ENCODE measurements at regions of chr16 and their contacts with region 1.

Region 1: DNA sequence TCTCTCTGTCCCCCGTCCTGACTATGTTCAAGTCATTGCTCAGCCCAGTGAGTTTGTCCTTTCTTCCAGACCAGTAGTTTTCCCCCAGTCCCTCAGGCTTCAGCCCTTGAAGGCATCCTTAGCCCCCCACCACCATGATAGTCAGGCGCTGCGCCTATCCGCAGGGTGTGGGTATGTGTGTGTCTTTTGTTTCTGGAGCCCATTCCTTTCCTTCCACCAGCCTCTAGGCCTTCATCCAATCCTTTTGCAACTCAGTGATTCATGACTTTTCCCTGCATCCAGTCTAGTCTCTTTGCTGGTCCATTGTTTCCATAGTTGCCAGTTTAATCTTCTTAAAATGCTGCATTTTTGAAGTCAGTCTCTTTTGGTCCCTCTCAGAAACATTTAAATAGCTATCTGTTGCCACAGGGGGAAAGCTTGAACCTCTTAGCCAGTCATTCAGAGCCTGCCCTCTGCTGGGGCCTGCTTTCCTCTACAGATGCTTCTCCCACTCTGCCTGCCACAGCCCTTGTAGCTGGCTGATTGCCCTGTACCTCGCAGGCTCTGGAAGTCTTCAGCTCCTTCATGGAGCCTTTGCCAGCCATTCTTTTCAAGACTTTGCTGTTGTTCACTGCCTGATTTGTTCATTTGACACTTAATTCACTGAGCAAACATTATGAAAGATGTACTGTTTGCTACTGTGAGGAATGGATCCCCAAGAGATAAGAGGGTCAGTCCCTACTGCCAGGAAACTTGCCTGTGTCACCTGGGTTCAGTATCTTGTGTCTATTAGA is 55.9 kb upstream of the ADCY7 start:
- DNase-seq: peak; percentile 75 to 80
- H3K4me3 ChIP-seq: no peak overlapping the region
- H3K4me3 Mint-ChIP-seq: no peak overlapping the region
- H3K27ac Mint-ChIP-seq: peak overlapping the region; percentile 69
- H3K4me1 ChIP-seq: peaks cover 29% of the 10 kb centered on the region
- H3K4me1 Mint-ChIP-seq: peaks cover 24% of the 10 kb centered on the region
- H3K27me3 ChIP-seq: no peaks in the 10 kb centered on the region
- H3K27me3 Mint-ChIP-seq: no peaks in the 10 kb centered on the region
- CTCF ChIP-seq: peak; percentile 76 to 91

Region 2: GRCh38 chr16:49959563-49960282 is 250.7 kb before region 1 on chr16:
- CTCF ChIA-PET with region 1: interaction called, 18 read pairs
- POLR2A ChIA-PET with region 1: no interaction called
- intact Hi-C with region 1: no loop called
- DNase-seq: no peak
- H3K4me3 ChIP-seq: no peak overlapping the region
- H3K4me3 Mint-ChIP-seq: no peak overlapping the region
- H3K27ac Mint-ChIP-seq: no peak overlapping the region
- H3K4me1 ChIP-seq: no peaks in the 10 kb centered on the region
- H3K4me1 Mint-ChIP-seq: peaks cover 1% of the 10 kb centered on the region
- H3K27me3 ChIP-seq: no peaks in the 10 kb centered on the region
- H3K27me3 Mint-ChIP-seq: peaks cover 3% of the 10 kb centered on the region
- CTCF ChIP-seq: no peak

Region 3: GRCh38 chr16:50065624-50066481 is 144.6 kb before region 1 on chr16 and contains the start of gene HEATR3:
- CTCF ChIA-PET with region 1: interaction called, 9 read pairs
- POLR2A ChIA-PET with region 1: no interaction called
- intact Hi-C with region 1: loop called (anchors 1 kb)
- DNase-seq: peak; percentile 96 to 97
- H3K4me3 ChIP-seq: peak within 1 kb of the TSS; percentile 86
- H3K4me3 Mint-ChIP-seq: peak within 1 kb of the TSS; percentile 94
- H3K27ac Mint-ChIP-seq: peak within 1 kb of the TSS; percentile 88
- H3K4me1 ChIP-seq: 0 out of 2 replicates have a peak, but pooled peaks cover 3% of the 10 kb centered on the region
- H3K4me1 Mint-ChIP-seq: peaks cover 19% of the 10 kb centered on the region
- H3K27me3 ChIP-seq: no peaks in the 10 kb centered on the region
- H3K27me3 Mint-ChIP-seq: no peaks in the 10 kb centered on the region
- CTCF ChIP-seq: no peak
- total RNA-seq, gene HEATR3: 41.6 and 42.8 TPM in 2 replicates

Region 4: GRCh38 chr16:50136399-50136798 is 74.1 kb before region 1 on chr16:
- CTCF ChIA-PET with region 1: interaction called, 13 read pairs
- POLR2A ChIA-PET with region 1: no interaction called
- intact Hi-C with region 1: no loop called
- DNase-seq: no peak
- H3K4me3 ChIP-seq: no peak overlapping the region
- H3K4me3 Mint-ChIP-seq: no peak overlapping the region
- H3K27ac Mint-ChIP-seq: no peak overlapping the region
- H3K4me1 ChIP-seq: no peaks in the 10 kb centered on the region
- H3K4me1 Mint-ChIP-seq: no peaks in the 10 kb centered on the region
- H3K27me3 ChIP-seq: no peaks in the 10 kb centered on the region
- H3K27me3 Mint-ChIP-seq: no peaks in the 10 kb centered on the region
- CTCF ChIP-seq: no peak

Region 5: DNA sequence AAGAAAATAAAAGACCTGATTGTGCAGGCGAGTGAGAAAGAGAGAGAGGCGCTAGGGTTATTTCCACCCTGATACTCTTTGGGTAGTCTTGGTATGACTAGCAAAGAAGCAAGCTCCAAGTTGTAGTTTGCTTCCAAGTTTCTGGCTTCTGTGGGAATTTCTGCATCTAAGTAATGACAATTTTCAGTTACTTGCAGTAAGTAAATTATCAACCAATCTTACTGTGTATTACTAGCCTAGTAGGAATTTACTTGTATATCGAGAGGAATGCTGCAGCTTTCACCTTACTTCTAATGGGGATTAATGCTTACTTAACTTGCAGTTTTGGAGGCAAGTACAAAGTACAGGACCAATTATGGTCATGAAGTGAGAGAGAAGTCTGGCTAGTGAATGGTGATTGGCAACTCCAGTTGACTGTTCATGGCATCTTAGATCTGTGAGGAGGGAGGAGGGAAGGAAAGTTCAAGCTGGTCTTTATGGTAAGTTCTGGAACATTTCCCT is 25.4 kb before region 1 on chr16:
- CTCF ChIA-PET with region 1: interaction called, 8 read pairs
- POLR2A ChIA-PET with region 1: no interaction called
- intact Hi-C with region 1: loop called (anchors 2 kb)
- DNase-seq: peak in 1 of 2 experiments; percentile 60
- H3K4me3 ChIP-seq: no peak overlapping the region; the same call in 1 of the 2 replicates
- H3K4me3 Mint-ChIP-seq: peak overlapping the region; percentile 17
- H3K27ac Mint-ChIP-seq: peak overlapping the region; percentile 8
- H3K4me1 ChIP-seq: peaks cover 19% of the 10 kb centered on the region
- H3K4me1 Mint-ChIP-seq: peaks cover 38% of the 10 kb centered on the region
- H3K27me3 ChIP-seq: no peaks in the 10 kb centered on the region
- H3K27me3 Mint-ChIP-seq: no peaks in the 10 kb centered on the region
- CTCF ChIP-seq: no peak

Region 6: GRCh38 chr16:50354629-50355456 is 144.4 kb after region 1 on chr16:
- CTCF ChIA-PET with region 1: interaction called, 11 read pairs
- POLR2A ChIA-PET with region 1: no interaction called
- intact Hi-C with region 1: loop called (anchors 1 kb)
- DNase-seq: no peak
- H3K4me3 ChIP-seq: no peak overlapping the region
- H3K4me3 Mint-ChIP-seq: no peak overlapping the region
- H3K27ac Mint-ChIP-seq: no peak overlapping the region
- H3K4me1 ChIP-seq: no peaks in the 10 kb centered on the region
- H3K4me1 Mint-ChIP-seq: no peaks in the 10 kb centered on the region
- H3K27me3 ChIP-seq: no peaks in the 10 kb centered on the region
- H3K27me3 Mint-ChIP-seq: no peaks in the 10 kb centered on the region
- CTCF ChIP-seq: peak; percentile 60 to 72